Breast epithelium (tissue), 4 donors: ENCODE measurements at regions of chr2 and their contacts with region 1.

Region 1: GRCh38 chr2:140586379-140586778 is 1544.4 kb downstream of the LRP1B start:
- DNase-seq: no peak
- H3K4me3 ChIP-seq: no peak overlapping the region
- H3K27ac ChIP-seq: no peak overlapping the region
- H3K4me1 ChIP-seq: no peaks in the 10 kb centered on the region
- H3K27me3 ChIP-seq: no peaks in the 10 kb centered on the region
- CTCF ChIP-seq: no peak
- POLR2A ChIP-seq: no peak

Region 2: DNA sequence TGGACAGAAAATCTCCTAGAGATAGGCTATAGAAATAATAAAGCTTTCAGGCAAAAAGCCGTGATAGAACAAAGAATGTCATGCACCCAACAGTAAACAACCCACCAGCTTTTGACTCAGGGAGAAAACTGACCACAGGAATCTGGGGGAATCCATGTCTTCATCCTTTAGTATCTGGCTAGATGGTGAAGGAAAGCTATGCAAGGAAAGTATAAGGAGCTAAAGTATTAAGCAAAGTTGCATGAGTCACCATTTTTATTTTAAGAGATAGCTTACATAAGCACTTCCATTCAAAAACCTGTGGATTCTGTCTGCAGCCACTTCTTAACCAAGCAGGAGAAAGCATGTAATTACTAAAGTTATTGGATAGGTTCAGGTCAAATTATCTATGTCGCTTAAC is 1180.7 kb after region 1 on chr2:
- intact Hi-C with region 1: loop called (anchors 5 kb)
- DNase-seq: no peak
- H3K4me3 ChIP-seq: no peak overlapping the region
- H3K27ac ChIP-seq: no peak overlapping the region
- H3K4me1 ChIP-seq: no peaks in the 10 kb centered on the region
- H3K27me3 ChIP-seq: no peaks in the 10 kb centered on the region
- CTCF ChIP-seq: no peak
- POLR2A ChIP-seq: no peak